Naive thymus-derived CD4-positive, alpha-beta T cell (primary cell): ENCODE measurements at regions of chr11 and their contacts with region 1.

Region 1: GRCh38 chr11:128290106-128290840 is 297.1 kb downstream of the ETS1 start:
- DNase-seq: peak; percentile 50 to 87 (median 81)
- ATAC-seq: peak; percentile 86
- H3K4me3 ChIP-seq: peak overlapping the region; percentile 61
- H3K4me3 Mint-ChIP-seq: peak overlapping the region; percentile 86 to 98 (median 90)
- H3K27ac ChIP-seq: peak overlapping the region; percentile 98
- H3K27ac Mint-ChIP-seq: peak overlapping the region; percentile 93 to 100 (median 98)
- H3K4me1 ChIP-seq: peaks cover 51 to 79% of the 10 kb centered on the region in 2 donors
- H3K4me1 Mint-ChIP-seq: peaks cover 62 to 100% (median 96%) of the 10 kb centered on the region in 7 donors
- H3K27me3 ChIP-seq: no peaks in the 10 kb centered on the region
- H3K27me3 Mint-ChIP-seq: no peaks in the 10 kb centered on the region

Region 2: GRCh38 chr11:128195057-128195751 is 95.1 kb before region 1 on chr11:
- CTCF ChIA-PET with region 1: no interaction called
- POLR2A ChIA-PET with region 1: interaction called, 4 read pairs
- intact Hi-C with region 1: loop called (anchors 1 kb)
- DNase-seq: peak in 7 of 9 donors; percentile 63 to 85 (median 76)
- ATAC-seq: peak; percentile 86
- H3K4me3 ChIP-seq: no peak overlapping the region
- H3K4me3 Mint-ChIP-seq: peak overlapping the region in 9 of 10 donors; percentile 1 to 67 (median 49)
- H3K27ac ChIP-seq: peak overlapping the region; percentile 17
- H3K27ac Mint-ChIP-seq: peak overlapping the region in 8 of 9 donors; percentile 72 to 87 (median 81)
- H3K4me1 ChIP-seq: peaks cover 31 to 33% of the 10 kb centered on the region in 2 donors
- H3K4me1 Mint-ChIP-seq: peaks cover 31 to 45% (median 41%) of the 10 kb centered on the region in 7 donors
- H3K27me3 ChIP-seq: no peaks in the 10 kb centered on the region
- H3K27me3 Mint-ChIP-seq: peaks cover 0 to 2% (median 0%) of the 10 kb centered on the region in 5 donors

Region 3: GRCh38 chr11:128323381-128323780 is 33.1 kb after region 1 on chr11:
- CTCF ChIA-PET with region 1: interaction called, 22 read pairs
- POLR2A ChIA-PET with region 1: interaction called, 325 read pairs
- intact Hi-C with region 1: loop called (anchors 1 kb)
- DNase-seq: peak in 7 of 9 donors; percentile 51 to 69 (median 60)
- ATAC-seq: no peak
- H3K4me3 ChIP-seq: peak overlapping the region; percentile 1
- H3K4me3 Mint-ChIP-seq: peak overlapping the region; percentile 21 to 89 (median 68)
- H3K27ac ChIP-seq: peak overlapping the region; percentile 91
- H3K27ac Mint-ChIP-seq: peak overlapping the region; percentile 95 to 99 (median 96)
- H3K4me1 ChIP-seq: peaks cover 80% of the 10 kb centered on the region in 2 donors
- H3K4me1 Mint-ChIP-seq: peaks cover 57 to 97% (median 87%) of the 10 kb centered on the region in 7 donors
- H3K27me3 ChIP-seq: no peaks in the 10 kb centered on the region
- H3K27me3 Mint-ChIP-seq: no peaks in the 10 kb centered on the region

Region 4: DNA sequence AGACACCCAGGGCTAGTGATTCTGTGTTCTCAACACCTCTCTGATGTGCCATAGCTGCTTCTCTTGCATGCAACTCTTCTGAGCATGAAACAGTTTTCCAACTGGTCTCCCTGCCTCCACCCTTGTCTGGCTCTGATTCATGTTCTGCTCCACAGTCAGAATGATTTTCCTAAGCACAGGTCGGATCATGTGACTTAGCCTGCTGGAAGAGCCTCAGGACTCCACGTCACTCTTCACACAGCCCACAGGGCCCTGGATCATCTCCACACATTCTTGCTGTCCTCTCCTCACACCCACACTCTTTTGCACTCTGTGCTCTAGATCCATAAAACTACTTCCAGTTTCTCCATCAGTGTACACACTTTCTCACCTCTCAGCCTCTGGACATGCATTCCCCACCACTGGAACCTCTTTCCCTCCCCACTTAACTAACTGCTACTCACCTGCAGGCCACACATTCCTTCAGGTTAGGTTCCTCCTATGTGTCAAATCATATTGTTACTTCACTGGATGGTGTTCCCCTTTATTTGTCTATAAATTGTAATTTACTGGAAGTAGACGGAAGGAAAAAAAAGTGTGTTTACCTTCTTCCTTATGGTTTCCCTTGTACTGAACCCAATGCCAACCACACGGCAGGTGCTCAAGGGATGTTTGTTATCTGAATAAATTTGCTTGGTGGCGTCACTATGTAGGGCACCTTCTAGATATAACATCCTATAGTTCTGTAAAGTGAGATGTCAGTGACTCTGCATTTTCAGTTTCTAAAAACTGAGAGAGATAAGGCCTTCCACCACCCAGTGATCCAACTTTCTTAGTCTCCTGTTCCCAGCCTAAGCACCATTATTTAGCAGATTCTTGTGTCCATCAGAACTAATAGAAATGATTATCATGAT is 163.4 kb after region 1 on chr11:
- CTCF ChIA-PET with region 1: interaction called, 6 read pairs
- POLR2A ChIA-PET with region 1: interaction called, 6 read pairs
- intact Hi-C with region 1: loop called in 1 of 2 experiments (anchors 1 kb)
- DNase-seq: peak in 1 of 9 donors; percentile 44
- ATAC-seq: peak; percentile 54
- H3K4me3 ChIP-seq: no peak overlapping the region
- H3K4me3 Mint-ChIP-seq: peak overlapping the region in 5 of 10 donors; percentile 0 to 64 (median 22)
- H3K27ac ChIP-seq: peak overlapping the region; percentile 33
- H3K27ac Mint-ChIP-seq: peak overlapping the region; percentile 58 to 97 (median 87)
- H3K4me1 ChIP-seq: peaks cover 0 to 12% of the 10 kb centered on the region in 2 donors
- H3K4me1 Mint-ChIP-seq: peaks cover 27 to 85% (median 60%) of the 10 kb centered on the region in 7 donors
- H3K27me3 ChIP-seq: no peaks in the 10 kb centered on the region
- H3K27me3 Mint-ChIP-seq: no peaks in the 10 kb centered on the region

Region 5: DNA sequence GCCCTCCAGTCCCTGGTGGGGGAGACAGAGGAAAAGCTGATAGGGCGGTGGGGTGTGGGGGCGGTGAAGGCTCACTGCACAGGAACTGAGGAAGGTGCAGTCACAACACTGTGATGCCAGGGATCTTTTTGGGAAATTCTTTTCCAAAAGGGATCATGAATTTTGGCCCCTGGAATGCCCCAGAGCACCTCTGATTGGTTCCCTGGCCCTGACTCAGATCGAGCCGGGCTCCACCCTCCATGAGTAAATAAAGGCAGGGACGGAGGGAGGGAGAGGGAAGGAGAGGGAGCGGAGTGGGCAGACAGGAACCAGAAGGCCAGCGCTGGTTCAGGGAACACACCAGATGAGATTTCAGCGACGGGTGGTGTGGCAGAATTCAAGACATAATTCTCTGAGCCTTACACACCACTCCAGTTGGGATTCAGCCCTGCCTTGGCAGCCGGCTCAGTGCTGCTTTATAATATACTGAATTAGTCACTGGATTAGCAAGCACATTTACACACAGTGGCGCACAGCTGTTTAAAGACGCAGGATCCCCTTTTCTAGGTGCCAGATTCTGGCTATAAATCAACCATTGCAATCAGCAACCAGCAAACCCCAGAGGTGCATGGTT is 216.8 kb after region 1 on chr11:
- CTCF ChIA-PET with region 1: interaction called, 12 read pairs
- POLR2A ChIA-PET with region 1: interaction called, 691 read pairs
- intact Hi-C with region 1: loop called (anchors 1 to 2 kb)
- DNase-seq: peak in 1 of 9 donors; percentile 60
- ATAC-seq: no peak
- H3K4me3 ChIP-seq: peak overlapping the region; percentile 96
- H3K4me3 Mint-ChIP-seq: peak overlapping the region; percentile 85 to 100 (median 98)
- H3K27ac ChIP-seq: peak overlapping the region; percentile 97
- H3K27ac Mint-ChIP-seq: peak overlapping the region; percentile 87 to 99 (median 97)
- H3K4me1 ChIP-seq: peaks cover 89 to 91% of the 10 kb centered on the region in 2 donors
- H3K4me1 Mint-ChIP-seq: peaks cover 70 to 98% (median 92%) of the 10 kb centered on the region in 7 donors
- H3K27me3 ChIP-seq: no peaks in the 10 kb centered on the region
- H3K27me3 Mint-ChIP-seq: no peaks in the 10 kb centered on the region

Region 6: DNA sequence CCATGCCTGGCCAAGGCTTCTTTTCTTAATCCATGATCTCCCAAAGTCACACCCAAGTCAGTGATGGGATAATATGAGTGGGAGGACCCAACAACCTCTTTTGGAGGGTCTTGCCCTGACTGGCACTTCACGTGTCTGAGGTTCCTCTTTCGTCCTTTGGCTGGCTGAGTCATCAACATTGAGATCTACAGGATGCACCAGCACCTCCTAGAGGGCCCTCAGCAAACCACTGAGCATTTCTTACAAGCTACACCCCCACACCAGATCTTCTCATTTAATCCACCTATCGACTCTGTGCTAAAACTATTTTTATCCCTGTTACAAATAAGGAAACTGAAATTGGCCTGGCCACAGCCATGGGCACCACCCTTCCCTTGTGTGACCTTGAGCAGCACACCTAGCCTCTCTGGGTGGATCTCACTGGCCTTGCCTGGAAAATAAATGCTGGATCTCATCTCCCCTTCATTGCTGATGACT is 467.0 kb after region 1 on chr11:
- CTCF ChIA-PET with region 1: interaction called, 3 read pairs
- POLR2A ChIA-PET with region 1: no interaction called
- intact Hi-C with region 1: loop called (anchors 1 to 2 kb)
- DNase-seq: peak; percentile 27 to 74 (median 61)
- ATAC-seq: peak; percentile 96
- H3K4me3 ChIP-seq: no peak overlapping the region
- H3K4me3 Mint-ChIP-seq: peak overlapping the region in 8 of 10 donors; percentile 9 to 62 (median 40)
- H3K27ac ChIP-seq: no peak overlapping the region
- H3K27ac Mint-ChIP-seq: peak overlapping the region; percentile 43 to 92 (median 84)
- H3K4me1 ChIP-seq: peaks cover 36 to 49% of the 10 kb centered on the region in 2 donors
- H3K4me1 Mint-ChIP-seq: peaks cover 70 to 96% (median 89%) of the 10 kb centered on the region in 7 donors
- H3K27me3 ChIP-seq: no peaks in the 10 kb centered on the region
- H3K27me3 Mint-ChIP-seq: no peaks in the 10 kb centered on the region